Naive thymus-derived CD4-positive, alpha-beta T cell (primary cell): ENCODE measurements at regions of chr17 and their contacts with region 1.

Region 1: GRCh38 chr17:2672026-2672425 is 39.5 kb downstream of the CLUH start:
- DNase-seq: no peak
- ATAC-seq: no peak
- H3K4me3 ChIP-seq: no peak overlapping the region
- H3K4me3 Mint-ChIP-seq: no peak overlapping the region
- H3K27ac ChIP-seq: peak overlapping the region; percentile 12
- H3K27ac Mint-ChIP-seq: peak overlapping the region in 1 of 9 donors; percentile 61
- H3K4me1 ChIP-seq: no peaks in the 10 kb centered on the region
- H3K4me1 Mint-ChIP-seq: peaks cover 2 to 6% (median 5%) of the 10 kb centered on the region in 7 donors
- H3K27me3 ChIP-seq: no peaks in the 10 kb centered on the region
- H3K27me3 Mint-ChIP-seq: no peaks in the 10 kb centered on the region

Region 2: DNA sequence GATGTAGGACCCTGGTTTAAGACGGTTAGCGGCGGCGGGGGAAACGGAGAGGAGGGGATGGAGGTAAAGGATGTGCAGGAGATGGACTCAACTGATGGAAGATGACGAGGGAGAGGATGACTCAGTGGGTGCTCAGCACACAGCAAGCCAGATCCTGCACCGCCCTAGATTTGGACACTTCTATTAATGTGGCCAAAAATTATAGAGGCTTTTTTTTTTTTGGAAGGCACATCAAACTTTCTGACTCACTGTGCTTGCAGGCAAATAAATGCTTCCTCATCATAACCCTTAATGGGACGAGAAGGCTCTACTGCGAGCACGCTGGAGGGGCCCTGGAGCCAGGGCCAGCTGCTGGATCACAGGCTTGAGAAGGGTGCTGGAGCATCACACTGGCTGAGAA is 682.9 kb before region 1 on chr17:
- CTCF ChIA-PET with region 1: no interaction called
- POLR2A ChIA-PET with region 1: no interaction called
- intact Hi-C with region 1: no loop called
- DNase-seq: no peak
- ATAC-seq: no peak
- H3K4me3 ChIP-seq: no peak overlapping the region
- H3K4me3 Mint-ChIP-seq: no peak overlapping the region
- H3K27ac ChIP-seq: no peak overlapping the region
- H3K27ac Mint-ChIP-seq: peak overlapping the region in 1 of 9 donors; percentile 5
- H3K4me1 ChIP-seq: no peaks in the 10 kb centered on the region
- H3K4me1 Mint-ChIP-seq: peaks cover 0 to 2% (median 0%) of the 10 kb centered on the region in 7 donors
- H3K27me3 ChIP-seq: no peaks in the 10 kb centered on the region
- H3K27me3 Mint-ChIP-seq: peaks cover 0 to 22% (median 5%) of the 10 kb centered on the region in 5 donors

Region 3: DNA sequence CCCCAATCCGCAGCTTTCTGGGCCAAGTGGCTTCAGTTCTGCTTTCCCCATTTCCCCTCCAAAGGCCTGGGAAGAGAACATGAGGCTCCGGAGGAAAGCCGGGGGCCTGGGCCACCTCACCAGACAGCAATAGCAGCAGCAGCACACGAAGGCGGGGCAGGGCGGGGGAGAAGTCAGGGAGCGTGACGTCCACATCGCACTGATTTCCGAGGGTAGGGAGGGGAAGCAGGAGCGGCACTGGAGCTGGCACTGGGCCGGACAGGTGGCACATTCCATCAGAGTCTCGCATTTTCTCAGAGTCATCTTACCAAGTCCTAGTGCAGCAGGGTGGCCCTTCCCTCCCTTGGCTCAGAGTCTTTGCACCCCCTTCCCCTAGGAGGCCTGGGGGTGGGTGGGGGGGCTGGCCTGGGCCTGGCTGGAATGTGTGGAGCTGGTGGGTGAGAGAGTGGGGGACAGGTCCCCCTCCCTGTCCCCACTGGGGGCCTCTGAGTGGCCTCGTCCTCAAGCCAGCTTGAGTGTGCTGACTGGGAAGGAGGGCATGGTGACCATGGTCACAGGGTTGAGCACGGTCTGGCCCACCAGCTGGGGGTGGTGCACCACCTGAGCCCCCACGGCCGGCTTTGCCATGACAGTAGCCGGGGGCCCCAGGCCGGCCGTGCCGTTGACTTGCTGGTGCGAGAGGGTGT is 285.5 kb before region 1 on chr17:
- CTCF ChIA-PET with region 1: interaction called, 5 read pairs
- POLR2A ChIA-PET with region 1: no interaction called
- intact Hi-C with region 1: loop called in 1 of 2 experiments (anchors 1 kb)
- DNase-seq: peak in 1 of 9 donors; percentile 8
- ATAC-seq: no peak
- H3K4me3 ChIP-seq: no peak overlapping the region
- H3K4me3 Mint-ChIP-seq: no peak overlapping the region
- H3K27ac ChIP-seq: no peak overlapping the region
- H3K27ac Mint-ChIP-seq: peak overlapping the region in 1 of 9 donors; percentile 65
- H3K4me1 ChIP-seq: peaks cover 3 to 19% of the 10 kb centered on the region in 2 donors
- H3K4me1 Mint-ChIP-seq: peaks cover 13 to 35% (median 27%) of the 10 kb centered on the region in 7 donors
- H3K27me3 ChIP-seq: no peaks in the 10 kb centered on the region
- H3K27me3 Mint-ChIP-seq: no peaks in the 10 kb centered on the region

Region 4: DNA sequence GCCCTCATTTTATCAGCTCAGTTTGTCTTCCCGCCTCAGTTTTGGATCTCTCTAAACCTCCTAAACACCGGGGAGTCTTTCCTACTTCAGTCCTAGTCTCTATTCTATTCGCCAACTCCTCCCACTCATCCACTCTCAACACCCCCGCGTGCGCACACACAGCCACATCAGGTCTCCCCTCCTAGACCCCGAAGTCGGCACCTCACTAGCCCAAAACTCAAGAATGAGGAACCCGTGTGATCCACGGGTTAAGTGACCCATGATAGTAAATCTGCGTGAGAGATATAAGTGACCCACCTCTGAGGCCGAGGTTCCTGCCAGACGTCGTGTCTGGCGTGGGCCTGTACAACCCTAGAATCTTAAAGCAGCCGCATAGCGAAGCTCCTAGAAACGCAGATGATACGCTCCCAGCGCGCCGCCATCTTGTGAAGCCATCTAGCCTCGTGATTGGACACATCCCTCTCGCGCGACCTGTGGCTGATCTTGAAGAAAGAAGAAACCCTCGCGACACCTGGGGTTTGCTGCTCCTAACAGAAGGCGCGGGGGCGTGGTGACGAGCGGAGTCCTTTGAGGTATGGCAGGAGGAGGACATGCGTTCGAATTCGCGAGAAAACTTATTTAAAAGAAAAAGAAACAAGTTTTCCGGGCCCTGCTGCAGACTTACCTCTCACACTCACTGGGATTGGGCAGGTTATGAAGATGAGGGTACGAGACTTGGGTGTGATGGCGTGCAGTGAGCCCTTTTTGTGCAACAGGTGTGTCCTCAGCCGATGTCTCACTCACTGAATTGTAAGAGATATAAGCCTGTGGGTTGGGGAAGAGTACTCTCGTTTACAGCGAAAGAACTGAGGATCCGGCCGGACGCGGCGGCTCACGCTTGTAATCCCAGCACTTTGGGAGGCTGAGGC is 160.3 kb before region 1 on chr17 and contains the start of gene METTL16:
- CTCF ChIA-PET with region 1: interaction called, 3 read pairs
- POLR2A ChIA-PET with region 1: interaction called, 3 read pairs
- intact Hi-C with region 1: loop called in 1 of 2 experiments (anchors 2 kb)
- DNase-seq: peak; percentile 86 to 99 (median 95)
- ATAC-seq: peak; percentile 99
- H3K4me3 ChIP-seq: peak within 1 kb of the TSS; percentile 74
- H3K4me3 Mint-ChIP-seq: peak within 1 kb of the TSS in 2 of 10 donors; percentile 33 to 55
- H3K27ac ChIP-seq: peak within 1 kb of the TSS; percentile 89
- H3K27ac Mint-ChIP-seq: peak within 1 kb of the TSS in 2 of 9 donors; percentile 32 to 77
- H3K4me1 ChIP-seq: peaks cover 9 to 14% of the 10 kb centered on the region in 2 donors
- H3K4me1 Mint-ChIP-seq: peaks cover 13 to 22% (median 15%) of the 10 kb centered on the region in 7 donors
- H3K27me3 ChIP-seq: no peaks in the 10 kb centered on the region
- H3K27me3 Mint-ChIP-seq: no peaks in the 10 kb centered on the region
- total RNA-seq, gene METTL16: 33.5 to 67.7 (median 52.7) TPM

Region 5: GRCh38 chr17:2656283-2656682 is 15.7 kb before region 1 on chr17:
- CTCF ChIA-PET with region 1: no interaction called
- POLR2A ChIA-PET with region 1: no interaction called
- intact Hi-C with region 1: no loop called
- DNase-seq: no peak
- ATAC-seq: no peak
- H3K4me3 ChIP-seq: no peak overlapping the region
- H3K4me3 Mint-ChIP-seq: no peak overlapping the region
- H3K27ac ChIP-seq: no peak overlapping the region
- H3K27ac Mint-ChIP-seq: peak overlapping the region in 3 of 9 donors; percentile 58 to 76 (median 68)
- H3K4me1 ChIP-seq: no peaks in the 10 kb centered on the region
- H3K4me1 Mint-ChIP-seq: peaks cover 30 to 61% (median 54%) of the 10 kb centered on the region in 7 donors
- H3K27me3 ChIP-seq: no peaks in the 10 kb centered on the region
- H3K27me3 Mint-ChIP-seq: no peaks in the 10 kb centered on the region